ENCODE measurements at regions of chr13 and their contacts with region 1.

Region 1: GRCh38 chr13:73754727-73755292 is 379.4 kb downstream of the KLF12 start:
- DNase-seq: peak in 3 of 9 experiments; percentile 38 to 75 (median 66)
- ATAC-seq: peak; percentile 62
- H3K4me3 ChIP-seq: no peak overlapping the region
- H3K4me3 Mint-ChIP-seq: no peak overlapping the region
- H3K27ac ChIP-seq: peak overlapping the region in 1 of 2 experiments; percentile 16
- H3K27ac Mint-ChIP-seq: peak overlapping the region; percentile 84
- H3K4me1 ChIP-seq: peaks cover 43% of the 10 kb centered on the region
- H3K4me1 Mint-ChIP-seq: peaks cover 53% of the 10 kb centered on the region
- H3K27me3 ChIP-seq: no peaks in the 10 kb centered on the region
- H3K27me3 Mint-ChIP-seq: no peaks in the 10 kb centered on the region
- CTCF ChIP-seq: peak; percentile 97

Region 2: DNA sequence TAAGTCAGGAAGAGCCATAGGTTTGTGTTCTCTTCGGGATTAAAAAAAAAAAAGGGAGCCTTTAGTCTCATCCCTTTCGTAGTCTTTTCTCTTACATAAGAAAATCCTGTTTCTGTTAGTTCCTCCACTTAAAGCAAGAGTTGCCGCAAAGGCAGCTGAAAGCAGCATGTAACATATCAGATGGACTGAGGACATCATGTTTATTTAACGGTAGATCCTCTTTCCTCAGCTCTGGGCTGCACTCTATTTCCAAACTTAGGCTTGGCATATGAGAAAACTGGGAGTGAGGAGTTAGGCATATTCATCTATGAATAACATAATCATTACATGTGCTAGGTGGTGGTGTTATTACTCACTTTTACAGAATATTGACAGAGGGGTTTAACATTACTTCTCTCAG is 11.8 kb before region 1 on chr13:
- CTCF ChIA-PET with region 1: interaction called, 3 read pairs
- POLR2A ChIA-PET with region 1: no interaction called
- intact Hi-C with region 1: loop called in 1 of 2 experiments (anchors 1 kb)
- DNase-seq: no peak
- ATAC-seq: no peak
- H3K4me3 ChIP-seq: no peak overlapping the region
- H3K4me3 Mint-ChIP-seq: no peak overlapping the region
- H3K27ac ChIP-seq: no peak overlapping the region
- H3K27ac Mint-ChIP-seq: peak overlapping the region; percentile 52
- H3K4me1 ChIP-seq: peaks cover 28% of the 10 kb centered on the region
- H3K4me1 Mint-ChIP-seq: peaks cover 53% of the 10 kb centered on the region
- H3K27me3 ChIP-seq: no peaks in the 10 kb centered on the region
- H3K27me3 Mint-ChIP-seq: no peaks in the 10 kb centered on the region
- CTCF ChIP-seq: no peak

Region 3: DNA sequence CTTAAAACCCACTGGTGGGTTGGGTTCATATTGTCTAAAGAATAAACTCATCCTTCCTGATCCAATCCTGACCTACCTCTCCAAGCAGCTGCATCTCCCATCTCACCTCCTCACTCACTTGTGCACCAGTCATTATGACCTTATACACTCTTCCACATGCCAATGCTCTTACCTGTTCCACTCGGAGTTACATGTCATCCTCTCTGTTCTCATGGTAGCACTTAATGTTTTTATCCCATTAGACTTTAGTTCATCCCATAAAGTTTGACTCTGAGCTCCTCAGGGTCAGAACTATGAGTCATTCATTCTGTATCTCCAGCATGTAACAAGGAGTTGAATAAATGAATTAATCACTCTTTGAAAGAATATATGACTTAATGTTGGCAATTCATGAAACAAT is 49.2 kb after region 1 on chr13:
- CTCF ChIA-PET with region 1: no interaction called
- POLR2A ChIA-PET with region 1: no interaction called
- intact Hi-C with region 1: loop called in 1 of 2 experiments (anchors 5 kb)
- DNase-seq: no peak
- ATAC-seq: no peak
- H3K4me3 ChIP-seq: no peak overlapping the region
- H3K4me3 Mint-ChIP-seq: no peak overlapping the region
- H3K27ac ChIP-seq: no peak overlapping the region
- H3K27ac Mint-ChIP-seq: peak overlapping the region; percentile 1
- H3K4me1 ChIP-seq: peaks cover 6% of the 10 kb centered on the region
- H3K4me1 Mint-ChIP-seq: peaks cover 35% of the 10 kb centered on the region
- H3K27me3 ChIP-seq: no peaks in the 10 kb centered on the region
- H3K27me3 Mint-ChIP-seq: no peaks in the 10 kb centered on the region
- CTCF ChIP-seq: no peak

Region 4: DNA sequence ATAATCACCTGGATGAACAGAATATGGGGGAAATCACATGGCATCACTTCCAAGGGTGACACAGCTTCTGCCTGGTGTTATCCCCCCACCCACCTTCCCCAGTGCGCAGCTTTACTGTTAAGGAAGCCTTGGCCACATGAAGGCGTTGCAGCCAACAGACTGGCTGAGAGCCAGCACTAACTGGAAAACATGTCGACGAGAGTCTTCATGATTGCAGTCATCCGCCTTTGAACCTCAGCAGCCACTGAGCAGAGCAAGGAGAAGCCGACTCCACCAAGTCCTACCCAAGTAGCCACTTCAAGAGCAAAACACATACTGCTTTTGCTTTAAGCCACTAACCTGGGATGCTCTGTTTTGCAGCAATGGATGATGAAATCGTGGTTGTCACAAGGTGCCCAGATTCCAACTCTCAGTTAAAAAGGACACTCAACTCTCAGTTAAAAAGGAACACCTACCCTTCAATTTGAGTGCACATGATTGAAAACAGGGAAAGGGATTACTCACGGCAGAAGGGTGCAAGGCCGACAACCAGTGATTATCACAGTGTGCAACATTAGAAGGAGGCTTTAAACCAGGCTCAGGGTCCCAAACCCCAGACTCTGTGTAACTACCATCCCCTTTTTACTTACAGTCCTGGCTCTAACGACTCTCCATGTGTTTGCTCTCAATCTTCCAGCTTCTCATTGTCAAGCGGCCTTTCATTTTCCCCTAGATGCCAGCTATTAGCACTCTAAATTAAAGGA is 230.3 kb after region 1 on chr13:
- CTCF ChIA-PET with region 1: no interaction called
- POLR2A ChIA-PET with region 1: no interaction called
- intact Hi-C with region 1: loop called (anchors 5 to 10 kb)
- DNase-seq: peak; percentile 51 to 93 (median 79)
- ATAC-seq: peak; percentile 90
- H3K4me3 ChIP-seq: peak overlapping the region in 1 of 2 experiments; percentile 8
- H3K4me3 Mint-ChIP-seq: peak overlapping the region; percentile 71
- H3K27ac ChIP-seq: peak overlapping the region; percentile 33 to 40
- H3K27ac Mint-ChIP-seq: no peak overlapping the region
- H3K4me1 ChIP-seq: peaks cover 53% of the 10 kb centered on the region
- H3K4me1 Mint-ChIP-seq: peaks cover 43% of the 10 kb centered on the region
- H3K27me3 ChIP-seq: no peaks in the 10 kb centered on the region
- H3K27me3 Mint-ChIP-seq: no peaks in the 10 kb centered on the region
- CTCF ChIP-seq: no peak

Region 5: GRCh38 chr13:75219479-75220237 is 1464.8 kb after region 1 on chr13:
- CTCF ChIA-PET with region 1: interaction called, 3 read pairs
- POLR2A ChIA-PET with region 1: no interaction called
- intact Hi-C with region 1: loop called (anchors 1 to 2 kb)
- DNase-seq: peak; percentile 67 to 91 (median 80)
- ATAC-seq: peak; percentile 99
- H3K4me3 ChIP-seq: no peak overlapping the region
- H3K4me3 Mint-ChIP-seq: peak overlapping the region; percentile 63
- H3K27ac ChIP-seq: no peak overlapping the region
- H3K27ac Mint-ChIP-seq: no peak overlapping the region
- H3K4me1 ChIP-seq: no peaks in the 10 kb centered on the region
- H3K4me1 Mint-ChIP-seq: peaks cover 6% of the 10 kb centered on the region
- H3K27me3 ChIP-seq: peaks cover 4 to 6% of the 10 kb centered on the region in 2 experiments
- H3K27me3 Mint-ChIP-seq: peaks cover 18% of the 10 kb centered on the region
- CTCF ChIP-seq: peak; percentile 96

Measured in CD8-positive, alpha-beta T cell (primary cell).